ENCODE measurements at regions of chr19 and their contacts with region 1.

Region 1: GRCh38 chr19:3494051-3494450 is 6.4 kb downstream of the DOHH start:
- DNase-seq: peak in 1 of 2 experiments; percentile 62
- H3K4me3 ChIP-seq: no peak overlapping the region
- H3K4me1 ChIP-seq: peaks cover under 1% of the 10 kb centered on the region; the same call in 1 of the 2 replicates
- H3K27me3 ChIP-seq: no peaks in the 10 kb centered on the region

Region 2: DNA sequence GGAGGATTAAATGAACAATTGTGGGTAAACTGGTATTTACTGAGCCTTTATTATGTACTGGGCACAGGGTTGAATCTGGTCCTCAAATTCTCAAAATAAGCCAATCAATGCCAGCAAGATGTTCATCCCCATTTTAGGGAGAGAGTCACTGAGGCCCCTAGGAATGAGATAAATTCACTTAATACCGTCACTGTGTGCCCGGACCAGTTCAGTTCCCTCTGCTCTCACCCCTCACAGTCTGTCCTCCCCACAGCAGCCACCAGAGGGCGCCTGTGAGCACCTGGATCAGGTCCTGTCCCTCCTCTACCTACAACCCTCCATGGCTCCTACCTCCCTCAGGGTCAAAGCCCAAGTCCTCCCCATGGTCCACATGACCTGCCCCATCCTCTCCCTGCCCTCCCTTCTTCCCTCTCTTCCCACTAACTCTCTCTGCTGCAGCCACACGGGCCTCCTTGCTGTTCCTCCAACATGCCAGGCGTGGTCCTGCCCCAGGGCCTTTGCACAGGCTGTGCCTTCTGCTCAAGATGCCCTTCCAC is 169.7 kb before region 1 on chr19:
- in situ Hi-C with region 1: loop called (anchors 5 kb)
- DNase-seq: peak in 1 of 2 experiments; percentile 88
- H3K4me3 ChIP-seq: no peak overlapping the region
- H3K4me1 ChIP-seq: no peaks in the 10 kb centered on the region
- H3K27me3 ChIP-seq: no peaks in the 10 kb centered on the region

Region 3: GRCh38 chr19:3450796-3451411 is 43.1 kb before region 1 on chr19:
- in situ Hi-C with region 1: no loop called
- DNase-seq: no peak
- H3K4me3 ChIP-seq: no peak overlapping the region
- H3K4me1 ChIP-seq: no peaks in the 10 kb centered on the region
- H3K27me3 ChIP-seq: no peaks in the 10 kb centered on the region

Region 4: GRCh38 chr19:3753631-3754410 is 259.8 kb after region 1 on chr19:
- in situ Hi-C with region 1: no loop called
- DNase-seq: no peak
- H3K4me3 ChIP-seq: no peak overlapping the region
- H3K4me1 ChIP-seq: no peaks in the 10 kb centered on the region
- H3K27me3 ChIP-seq: no peaks in the 10 kb centered on the region

Measured in HAP-1 (cell line).